IMR-90 (cell line): ENCODE measurements at regions of chr14 and their contacts with region 1.

Region 1: DNA sequence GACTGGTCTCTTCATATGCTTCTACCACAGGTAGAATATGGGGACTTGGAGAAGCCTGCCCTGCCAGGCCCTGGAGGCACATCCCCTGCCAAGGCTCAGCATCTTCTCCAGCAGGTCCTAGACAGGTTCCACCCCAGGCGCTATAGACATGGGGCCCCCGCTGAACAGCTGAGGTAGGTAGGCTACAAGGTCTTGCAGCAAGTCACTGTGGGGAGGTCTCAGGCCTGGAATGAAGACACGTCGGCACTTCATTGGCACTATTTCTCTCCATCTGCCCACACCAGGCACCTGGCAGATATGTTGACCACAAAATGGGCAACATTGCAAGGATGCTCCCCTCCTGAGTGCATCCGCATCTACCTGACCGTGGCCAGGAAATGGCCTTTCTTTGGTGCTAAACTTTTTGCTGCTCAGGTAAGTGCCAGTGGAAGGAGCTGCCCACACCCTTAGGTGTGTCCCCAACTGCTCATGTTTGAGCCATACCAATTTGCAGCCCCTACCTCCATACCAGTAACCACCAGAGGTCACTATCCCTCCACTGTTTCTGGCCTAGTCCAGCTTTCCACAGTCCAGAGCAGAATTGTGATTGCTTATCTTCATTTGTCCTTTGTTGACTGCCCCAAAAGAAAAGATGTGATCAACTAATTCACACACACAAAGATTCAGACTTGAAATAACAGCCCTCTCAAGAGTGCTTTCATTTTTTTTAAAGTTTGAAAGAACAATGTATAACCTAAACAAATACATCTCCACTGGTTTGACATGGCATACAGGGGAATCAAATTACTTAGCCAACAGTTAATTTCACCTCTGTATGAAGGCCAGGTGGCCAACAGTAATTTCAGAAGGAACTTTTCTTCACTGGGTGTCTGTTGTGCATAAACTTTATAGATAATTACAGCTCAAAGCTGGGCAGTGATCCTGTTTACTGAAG is 16.1 kb downstream of the PIGH start:
- DNase-seq: peak; percentile 52
- ATAC-seq: peak; percentile 94
- H3K4me3 ChIP-seq: no peak overlapping the region
- H3K27ac ChIP-seq: no peak overlapping the region
- H3K4me1 ChIP-seq: no peaks in the 10 kb centered on the region
- H3K27me3 ChIP-seq: peaks cover 4% of the 10 kb centered on the region; the same call in 1 of the 2 replicates
- CTCF ChIP-seq: peak; percentile 72
- POLR2A ChIP-seq: no peak
- RAD21 ChIP-seq: peak; percentile 85

Region 2: GRCh38 chr14:67619446-67620216 is 35.7 kb after region 1 on chr14 and contains the start of gene ARG2:
- CTCF ChIA-PET with region 1: interaction called, 3 read pairs
- POLR2A ChIA-PET with region 1: no interaction called
- dilution Hi-C with region 1: no loop called
- in situ Hi-C with region 1: no loop called
- intact Hi-C with region 1: loop called (anchors 1 kb)
- DNase-seq: peak; percentile 91
- ATAC-seq: peak; percentile 91
- H3K4me3 ChIP-seq: peak within 1 kb of the TSS; percentile 47
- H3K27ac ChIP-seq: no peak within 1 kb of the TSS
- H3K4me1 ChIP-seq: peaks cover 3% of the 10 kb centered on the region; the same call in 1 of the 2 replicates
- H3K27me3 ChIP-seq: peaks cover 4% of the 10 kb centered on the region
- CTCF ChIP-seq: 0 out of 2 replicates have a peak, but pooled peaks have one; percentile 7
- POLR2A ChIP-seq: peak; percentile 61; the same call in 1 of the 2 replicates
- RAD21 ChIP-seq: no peak
- total RNA-seq, gene ARG2: 2.2 and 2.5 TPM in 2 replicates

Region 3: DNA sequence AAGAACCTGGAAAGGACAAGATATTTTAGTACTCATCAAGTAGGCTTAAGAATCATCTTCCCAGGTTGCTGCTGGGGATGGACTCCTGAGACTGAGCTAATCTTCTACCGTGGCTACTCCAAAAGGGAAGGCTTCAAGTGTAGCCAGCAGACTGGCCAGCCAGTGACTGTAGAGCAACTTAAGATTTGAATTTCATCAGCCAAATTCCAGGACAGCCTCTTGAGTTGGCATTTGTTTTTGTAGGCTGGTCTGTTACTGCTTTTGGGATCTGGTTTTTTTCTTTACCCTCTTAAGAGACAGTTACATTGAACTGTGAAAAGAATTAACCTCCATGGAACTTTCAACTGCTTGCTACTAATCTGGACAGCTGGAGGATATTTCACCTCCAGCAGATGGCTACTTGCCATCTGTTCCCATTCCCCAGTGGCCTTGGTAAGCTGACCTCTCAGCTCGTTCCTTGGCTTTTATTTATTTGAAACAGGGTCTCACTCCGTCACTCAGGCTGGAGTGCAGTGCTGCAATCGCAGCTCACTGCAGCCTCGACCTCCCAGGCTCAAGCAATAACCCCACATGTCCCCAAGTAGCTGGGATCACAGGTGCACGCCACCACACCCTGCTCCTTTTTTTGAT is 69.8 kb after region 1 on chr14:
- CTCF ChIA-PET with region 1: no interaction called
- POLR2A ChIA-PET with region 1: no interaction called
- dilution Hi-C with region 1: no loop called
- in situ Hi-C with region 1: no loop called
- intact Hi-C with region 1: no loop called
- DNase-seq: peak; percentile 35
- ATAC-seq: peak; percentile 52
- H3K4me3 ChIP-seq: no peak overlapping the region
- H3K27ac ChIP-seq: peak overlapping the region; percentile 66; the same call in 1 of the 2 replicates
- H3K4me1 ChIP-seq: peaks cover 2% of the 10 kb centered on the region; the same call in 1 of the 2 replicates
- H3K27me3 ChIP-seq: no peaks in the 10 kb centered on the region
- CTCF ChIP-seq: no peak
- POLR2A ChIP-seq: no peak
- RAD21 ChIP-seq: no peak